Naive thymus-derived CD4-positive, alpha-beta T cell (primary cell): ENCODE measurements at regions of chr4 and their contacts with region 1.

Region 1: GRCh38 chr4:118772081-118772766 is 63.7 kb downstream of the SEC24D start:
- DNase-seq: peak in 7 of 9 donors; percentile 22 to 53 (median 36)
- ATAC-seq: peak; percentile 80
- H3K4me3 ChIP-seq: no peak overlapping the region
- H3K4me3 Mint-ChIP-seq: no peak overlapping the region
- H3K27ac ChIP-seq: no peak overlapping the region
- H3K27ac Mint-ChIP-seq: no peak overlapping the region
- H3K4me1 ChIP-seq: no peaks in the 10 kb centered on the region
- H3K4me1 Mint-ChIP-seq: no peaks in the 10 kb centered on the region
- H3K27me3 ChIP-seq: no peaks in the 10 kb centered on the region
- H3K27me3 Mint-ChIP-seq: no peaks in the 10 kb centered on the region

Region 2: DNA sequence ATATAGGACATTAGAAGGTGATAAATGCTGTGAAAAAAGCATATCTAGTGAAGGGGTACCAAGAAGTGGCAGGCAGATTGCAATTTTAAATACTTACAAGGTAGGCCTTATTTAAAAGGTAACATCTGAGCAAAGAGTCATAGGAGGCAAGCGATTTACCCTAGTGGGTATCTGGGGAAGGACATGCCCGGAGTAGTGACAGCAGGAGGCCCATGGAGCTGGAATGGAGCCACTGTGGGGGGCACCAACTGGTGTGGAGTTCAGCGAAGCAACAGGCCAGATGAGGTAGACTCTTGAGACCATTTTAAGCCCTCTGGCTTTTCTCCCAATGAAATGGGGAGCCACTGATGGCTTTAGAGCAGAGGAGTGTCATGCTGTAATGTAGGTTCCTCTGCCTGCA is 26.4 kb after region 1 on chr4:
- CTCF ChIA-PET with region 1: no interaction called
- POLR2A ChIA-PET with region 1: no interaction called
- intact Hi-C with region 1: no loop called
- DNase-seq: no peak
- ATAC-seq: no peak
- H3K4me3 ChIP-seq: no peak overlapping the region
- H3K4me3 Mint-ChIP-seq: no peak overlapping the region
- H3K27ac ChIP-seq: no peak overlapping the region
- H3K27ac Mint-ChIP-seq: no peak overlapping the region
- H3K4me1 ChIP-seq: no peaks in the 10 kb centered on the region
- H3K4me1 Mint-ChIP-seq: peaks cover 0 to 2% (median 0%) of the 10 kb centered on the region in 7 donors
- H3K27me3 ChIP-seq: no peaks in the 10 kb centered on the region
- H3K27me3 Mint-ChIP-seq: no peaks in the 10 kb centered on the region

Region 3: DNA sequence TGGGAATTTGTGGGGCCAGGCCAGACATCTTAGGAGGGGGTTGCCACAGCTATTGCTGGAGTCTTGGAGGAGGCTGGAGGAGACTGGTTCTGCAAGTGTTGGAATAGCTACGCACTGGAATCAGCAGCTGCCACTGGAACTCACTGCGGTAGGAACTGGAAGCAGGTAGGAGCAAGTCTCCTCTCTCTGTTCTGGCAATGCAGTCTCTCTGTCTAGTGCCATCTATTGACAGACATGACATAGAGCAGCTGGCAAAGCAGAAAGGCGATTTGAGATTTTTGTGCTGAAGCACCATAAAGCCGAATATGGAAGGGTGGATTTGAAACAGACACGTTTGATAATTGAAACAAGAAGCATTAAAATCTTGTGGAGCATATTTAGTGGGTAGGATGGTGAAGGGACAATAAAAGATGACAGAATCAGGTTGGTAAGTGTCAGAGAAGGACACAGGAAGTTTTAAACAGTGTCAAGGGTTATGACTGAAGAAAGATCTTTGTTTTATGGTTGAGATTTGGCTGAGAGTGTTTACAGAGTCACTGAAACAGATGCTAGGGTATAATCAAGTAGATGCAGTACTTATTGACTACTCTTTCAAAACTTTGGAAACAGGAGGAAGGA is 93.0 kb after region 1 on chr4:
- CTCF ChIA-PET with region 1: interaction called, 10 read pairs
- POLR2A ChIA-PET with region 1: no interaction called
- intact Hi-C with region 1: loop called (anchors 1 kb)
- DNase-seq: peak in 6 of 9 donors; percentile 7 to 39 (median 28)
- ATAC-seq: peak; percentile 77
- H3K4me3 ChIP-seq: no peak overlapping the region
- H3K4me3 Mint-ChIP-seq: no peak overlapping the region
- H3K27ac ChIP-seq: no peak overlapping the region
- H3K27ac Mint-ChIP-seq: no peak overlapping the region
- H3K4me1 ChIP-seq: no peaks in the 10 kb centered on the region
- H3K4me1 Mint-ChIP-seq: peaks cover 0 to 7% (median 0%) of the 10 kb centered on the region in 7 donors
- H3K27me3 ChIP-seq: no peaks in the 10 kb centered on the region
- H3K27me3 Mint-ChIP-seq: peaks cover 0 to 16% (median 0%) of the 10 kb centered on the region in 5 donors

Region 4: DNA sequence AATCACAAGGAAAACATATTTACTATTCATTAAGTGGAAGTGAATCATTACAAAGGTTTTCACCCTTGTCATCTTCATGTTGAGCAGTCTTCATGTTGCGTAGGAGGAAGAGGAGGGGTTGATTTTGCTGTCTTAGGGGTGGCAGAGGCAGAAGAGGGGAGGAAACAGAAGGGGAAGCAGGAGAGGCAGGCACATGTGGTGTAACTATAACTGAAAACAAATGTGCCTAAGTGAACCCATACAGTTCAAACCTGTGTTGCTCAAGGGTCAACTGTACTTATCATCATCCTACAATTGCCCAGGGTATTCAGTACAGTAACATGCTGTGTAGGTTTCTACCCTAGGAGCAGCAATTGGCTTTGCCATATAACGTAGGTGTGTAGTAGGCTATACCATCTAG is 163.6 kb after region 1 on chr4:
- CTCF ChIA-PET with region 1: no interaction called
- POLR2A ChIA-PET with region 1: no interaction called
- intact Hi-C with region 1: no loop called
- DNase-seq: no peak
- ATAC-seq: peak; percentile 47
- H3K4me3 ChIP-seq: no peak overlapping the region
- H3K4me3 Mint-ChIP-seq: no peak overlapping the region
- H3K27ac ChIP-seq: no peak overlapping the region
- H3K27ac Mint-ChIP-seq: no peak overlapping the region
- H3K4me1 ChIP-seq: no peaks in the 10 kb centered on the region
- H3K4me1 Mint-ChIP-seq: no peaks in the 10 kb centered on the region
- H3K27me3 ChIP-seq: no peaks in the 10 kb centered on the region
- H3K27me3 Mint-ChIP-seq: peaks cover under 1 to 21% (median 7%) of the 10 kb centered on the region in 5 donors

Region 5: DNA sequence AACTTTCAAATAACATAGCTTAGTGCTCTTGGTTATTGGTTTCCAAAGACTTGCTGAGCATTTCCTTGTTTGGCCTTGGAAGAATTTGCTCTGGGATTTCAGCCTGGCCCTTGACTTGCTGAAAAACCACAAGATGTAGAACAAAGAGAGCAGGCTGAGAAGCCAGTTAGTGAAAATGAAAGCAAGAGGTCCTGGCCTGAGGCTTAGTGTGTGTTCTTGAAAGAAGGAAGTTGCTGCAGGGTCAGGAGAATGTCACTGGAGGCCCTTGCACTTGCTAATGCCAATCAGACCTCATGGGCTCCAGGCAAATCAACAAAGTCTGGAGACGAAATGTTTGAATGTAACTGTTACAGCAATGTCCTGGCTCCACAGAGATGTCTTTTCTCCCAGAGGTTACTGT is 195.8 kb after region 1 on chr4:
- CTCF ChIA-PET with region 1: interaction called, 4 read pairs
- POLR2A ChIA-PET with region 1: no interaction called
- intact Hi-C with region 1: loop called (anchors 1 to 5 kb)
- DNase-seq: peak in 1 of 9 donors; percentile 1
- ATAC-seq: peak; percentile 84
- H3K4me3 ChIP-seq: no peak overlapping the region
- H3K4me3 Mint-ChIP-seq: peak overlapping the region in 2 of 10 donors; percentile 2 to 9
- H3K27ac ChIP-seq: no peak overlapping the region
- H3K27ac Mint-ChIP-seq: peak overlapping the region in 2 of 9 donors; percentile 9 to 64
- H3K4me1 ChIP-seq: no peaks in the 10 kb centered on the region
- H3K4me1 Mint-ChIP-seq: peaks cover 6 to 12% (median 9%) of the 10 kb centered on the region in 7 donors
- H3K27me3 ChIP-seq: no peaks in the 10 kb centered on the region
- H3K27me3 Mint-ChIP-seq: peaks cover 0 to 8% (median 0%) of the 10 kb centered on the region in 5 donors

Region 6: GRCh38 chr4:119041951-119042560 is 269.8 kb after region 1 on chr4:
- CTCF ChIA-PET with region 1: interaction called, 3 read pairs
- POLR2A ChIA-PET with region 1: no interaction called
- intact Hi-C with region 1: loop called (anchors 1 to 5 kb)
- DNase-seq: peak in 7 of 9 donors; percentile 30 to 72 (median 61)
- ATAC-seq: peak; percentile 94
- H3K4me3 ChIP-seq: no peak overlapping the region
- H3K4me3 Mint-ChIP-seq: peak overlapping the region in 1 of 10 donors; percentile 25
- H3K27ac ChIP-seq: no peak overlapping the region
- H3K27ac Mint-ChIP-seq: no peak overlapping the region
- H3K4me1 ChIP-seq: no peaks in the 10 kb centered on the region
- H3K4me1 Mint-ChIP-seq: peaks cover 0 to 12% (median 0%) of the 10 kb centered on the region in 7 donors
- H3K27me3 ChIP-seq: no peaks in the 10 kb centered on the region
- H3K27me3 Mint-ChIP-seq: peaks cover 0 to 3% (median 0%) of the 10 kb centered on the region in 5 donors

Region 7: DNA sequence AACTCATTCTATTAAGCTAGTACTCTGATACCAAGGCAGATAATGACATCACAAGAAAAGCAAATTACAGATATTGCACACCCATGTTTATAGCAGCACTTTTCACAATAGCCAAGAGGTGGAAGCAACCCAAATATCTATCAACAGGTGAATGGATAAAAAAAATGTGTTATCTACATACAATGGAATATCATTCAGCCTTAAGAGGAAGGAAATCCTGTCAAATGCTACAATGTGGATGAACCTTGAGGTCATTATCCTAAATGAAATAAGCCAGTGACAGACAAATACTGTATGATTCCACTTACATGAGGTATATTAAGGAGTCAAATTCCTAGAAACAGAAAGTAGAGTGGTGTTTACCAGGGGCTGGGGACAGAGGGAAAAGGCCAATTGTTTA is 535.4 kb after region 1 on chr4:
- CTCF ChIA-PET with region 1: no interaction called
- POLR2A ChIA-PET with region 1: no interaction called
- intact Hi-C with region 1: no loop called
- DNase-seq: no peak
- ATAC-seq: no peak
- H3K4me3 ChIP-seq: no peak overlapping the region
- H3K4me3 Mint-ChIP-seq: no peak overlapping the region
- H3K27ac ChIP-seq: no peak overlapping the region
- H3K27ac Mint-ChIP-seq: no peak overlapping the region
- H3K4me1 ChIP-seq: no peaks in the 10 kb centered on the region
- H3K4me1 Mint-ChIP-seq: peaks cover 0 to 5% (median 4%) of the 10 kb centered on the region in 7 donors
- H3K27me3 ChIP-seq: no peaks in the 10 kb centered on the region
- H3K27me3 Mint-ChIP-seq: peaks cover 0 to 19% (median 6%) of the 10 kb centered on the region in 5 donors

Region 8: GRCh38 chr4:120049732-120050494 is 1277.7 kb after region 1 on chr4:
- CTCF ChIA-PET with region 1: no interaction called
- POLR2A ChIA-PET with region 1: no interaction called
- intact Hi-C with region 1: loop called in 1 of 2 experiments (anchors 10 kb)
- DNase-seq: peak; percentile 41 to 78 (median 64)
- ATAC-seq: peak; percentile 97
- H3K4me3 ChIP-seq: no peak overlapping the region
- H3K4me3 Mint-ChIP-seq: peak overlapping the region in 7 of 10 donors; percentile 22 to 84 (median 33)
- H3K27ac ChIP-seq: no peak overlapping the region
- H3K27ac Mint-ChIP-seq: peak overlapping the region in 1 of 9 donors; percentile 3
- H3K4me1 ChIP-seq: no peaks in the 10 kb centered on the region
- H3K4me1 Mint-ChIP-seq: peaks cover 0 to 5% (median 4%) of the 10 kb centered on the region in 7 donors
- H3K27me3 ChIP-seq: no peaks in the 10 kb centered on the region
- H3K27me3 Mint-ChIP-seq: no peaks in the 10 kb centered on the region